IMR-90 (cell line): ENCODE measurements at regions of chr3 and their contacts with region 1.

Region 1: DNA sequence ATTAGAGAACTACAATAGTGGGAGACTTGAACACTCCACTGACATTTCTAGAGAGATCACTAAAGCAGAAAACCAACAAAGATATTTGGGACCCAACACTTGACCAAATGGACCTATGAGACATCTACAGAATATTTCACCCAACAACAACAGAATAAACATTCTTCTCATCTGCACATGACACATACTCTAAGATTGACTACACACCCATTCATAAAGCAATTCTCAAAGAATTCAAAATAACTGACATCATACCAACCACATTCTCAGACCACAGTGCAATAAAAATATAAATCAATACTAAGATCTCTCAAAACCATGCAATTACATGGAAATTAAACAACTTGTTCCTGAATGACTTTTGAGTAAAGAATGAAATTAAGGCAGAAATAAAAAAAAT is 473.7 kb downstream of the LPP start:
- DNase-seq: peak; percentile 94
- ATAC-seq: peak; percentile 67
- H3K4me3 ChIP-seq: no peak overlapping the region
- H3K27ac ChIP-seq: peak overlapping the region; percentile 82; the same call in 1 of the 2 replicates
- H3K4me1 ChIP-seq: peaks cover 19% of the 10 kb centered on the region
- H3K27me3 ChIP-seq: no peaks in the 10 kb centered on the region
- CTCF ChIP-seq: no peak
- POLR2A ChIP-seq: no peak
- RAD21 ChIP-seq: no peak

Region 2: DNA sequence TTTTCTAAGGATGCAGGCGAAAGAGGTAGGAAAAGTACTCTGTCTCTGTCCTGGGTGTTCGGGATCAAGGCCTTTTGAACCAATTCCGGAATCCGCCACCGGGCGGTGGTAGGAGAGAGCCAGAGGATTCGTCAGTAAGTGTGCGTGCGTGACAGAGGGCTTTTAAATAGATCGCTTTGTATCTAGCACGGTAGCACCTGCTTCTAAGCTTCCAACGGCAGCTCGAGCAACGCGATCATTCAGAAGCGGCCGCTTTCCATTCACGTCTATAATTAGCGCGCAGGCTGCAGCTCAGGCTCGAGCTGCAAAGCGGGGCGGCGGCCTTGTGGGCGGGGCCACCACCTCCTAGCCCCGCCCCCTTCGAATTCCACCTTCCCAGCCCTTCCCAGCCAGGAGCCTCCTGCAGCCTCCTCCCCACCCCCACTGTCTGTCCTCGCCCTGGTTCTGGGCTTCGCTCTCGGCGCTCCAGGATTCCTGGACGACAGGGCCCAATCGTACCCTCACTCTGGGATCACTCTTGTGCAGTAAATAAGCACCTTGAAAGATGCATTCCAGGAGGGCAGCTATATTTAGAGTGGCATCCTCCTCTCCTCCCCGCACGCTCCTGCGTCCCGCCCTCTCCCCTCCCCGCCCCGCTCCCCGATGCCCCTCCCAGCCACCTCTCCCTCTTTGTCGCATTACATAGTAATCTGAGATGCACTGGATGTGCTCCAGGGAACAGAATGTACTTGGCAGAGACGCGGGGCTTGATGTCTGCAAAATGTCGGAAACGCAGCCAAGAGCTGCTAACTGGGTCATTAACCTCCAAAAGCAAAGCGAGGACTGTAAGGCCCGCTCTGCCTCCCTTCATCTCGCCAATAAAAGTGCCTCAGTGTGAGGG is 320.0 kb after region 1 on chr3:
- CTCF ChIA-PET with region 1: no interaction called
- POLR2A ChIA-PET with region 1: no interaction called
- dilution Hi-C with region 1: no loop called
- in situ Hi-C with region 1: no loop called
- intact Hi-C with region 1: loop called (anchors 1 kb)
- DNase-seq: peak; percentile 85
- ATAC-seq: peak; percentile 65
- H3K4me3 ChIP-seq: peak overlapping the region; percentile 36
- H3K27ac ChIP-seq: peak overlapping the region; percentile 69
- H3K4me1 ChIP-seq: peaks cover 19% of the 10 kb centered on the region
- H3K27me3 ChIP-seq: no peaks in the 10 kb centered on the region
- CTCF ChIP-seq: 0 out of 2 replicates have a peak, but pooled peaks have one; percentile 20
- POLR2A ChIP-seq: no peak
- RAD21 ChIP-seq: no peak